ENCODE measurements at regions of chr14 and their contacts with region 1.

Region 1: DNA sequence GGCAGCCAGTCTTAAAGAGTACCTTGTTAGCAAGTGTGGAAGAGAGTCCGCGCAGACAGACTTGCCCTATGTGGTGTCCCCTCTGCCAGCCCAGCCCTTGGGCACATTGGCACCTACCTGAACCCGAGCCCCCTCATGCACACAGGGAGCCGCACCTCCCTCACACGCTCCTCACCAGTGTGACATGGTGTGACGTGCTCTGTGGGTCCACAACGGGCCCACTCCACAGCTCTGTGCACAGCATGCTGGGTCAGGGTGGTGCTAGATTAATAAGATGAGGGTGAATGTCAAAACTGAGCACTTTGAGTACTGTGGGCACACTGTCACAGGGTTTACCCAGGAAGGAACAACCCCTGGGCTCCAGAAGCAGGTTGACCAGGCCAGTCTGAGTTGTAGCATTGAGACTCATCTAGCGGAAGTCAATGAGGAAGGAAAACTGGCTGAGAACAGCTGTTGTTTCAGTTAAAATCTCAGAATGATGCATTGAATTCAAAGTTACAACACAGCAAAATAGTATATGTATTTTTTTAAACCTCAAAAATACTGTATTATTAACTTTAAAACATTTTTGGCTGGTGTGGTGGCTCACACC is 53.4 kb upstream of the AMN start:
- DNase-seq: no peak
- H3K4me3 Mint-ChIP-seq: no peak overlapping the region
- H3K27ac Mint-ChIP-seq: no peak overlapping the region
- H3K4me1 Mint-ChIP-seq: no peaks in the 10 kb centered on the region
- H3K27me3 Mint-ChIP-seq: no peaks in the 10 kb centered on the region
- CTCF ChIP-seq: no peak

Region 2: GRCh38 chr14:102774391-102775153 is 94.5 kb before region 1 on chr14:
- CTCF ChIA-PET with region 1: interaction called, 4 read pairs
- POLR2A ChIA-PET with region 1: no interaction called
- intact Hi-C with region 1: loop called (anchors 10 kb)
- DNase-seq: peak; percentile 75
- H3K4me3 Mint-ChIP-seq: no peak overlapping the region
- H3K27ac Mint-ChIP-seq: no peak overlapping the region
- H3K4me1 Mint-ChIP-seq: peaks cover 10% of the 10 kb centered on the region
- H3K27me3 Mint-ChIP-seq: peaks cover 14% of the 10 kb centered on the region
- CTCF ChIP-seq: peak; percentile 59

Region 3: DNA sequence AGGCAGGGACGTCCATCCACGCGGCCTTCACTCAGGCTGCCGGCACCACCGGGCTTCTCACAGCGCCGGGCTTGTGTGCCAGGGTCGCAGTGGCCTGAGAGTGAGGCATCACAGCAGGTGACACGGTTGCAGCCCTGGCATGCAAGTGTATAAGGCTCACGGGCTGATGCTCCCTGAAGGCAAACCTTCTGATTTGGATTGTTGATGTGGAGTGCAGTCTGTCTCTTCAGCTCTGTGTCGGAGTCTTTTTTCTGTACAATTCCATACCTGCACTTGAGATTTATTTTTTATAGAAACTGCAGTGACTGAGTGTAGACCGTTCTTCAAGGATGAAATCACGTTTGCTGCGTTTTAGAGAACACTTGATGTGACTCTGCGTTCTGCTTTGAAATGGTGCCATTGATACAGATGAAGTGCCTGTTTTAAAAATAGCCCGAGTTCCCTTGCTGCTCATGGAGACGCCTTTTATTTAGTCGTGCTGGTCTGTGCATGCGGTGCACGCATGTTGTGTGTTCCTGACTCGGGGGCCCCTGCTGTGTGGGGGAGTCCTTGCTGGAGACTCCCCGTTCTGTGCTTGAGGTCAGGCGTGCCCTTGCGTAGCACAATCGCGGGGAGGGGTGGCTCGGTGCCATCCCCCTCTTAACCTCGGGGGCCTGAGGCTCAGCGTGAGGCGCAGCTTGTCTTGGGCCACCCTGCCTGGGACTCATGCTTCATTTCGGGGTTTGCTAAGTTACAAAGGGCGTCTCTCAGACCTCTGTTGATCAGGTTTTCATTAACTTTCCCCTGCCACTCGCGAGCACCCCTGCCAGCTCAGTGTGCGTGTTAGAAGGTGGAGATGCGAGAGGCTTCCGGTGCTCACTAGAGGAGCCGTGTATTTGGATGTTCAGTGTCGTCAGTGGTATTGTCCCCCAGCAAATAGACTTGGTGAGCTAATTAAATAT is 31.8 kb after region 1 on chr14:
- CTCF ChIA-PET with region 1: no interaction called
- POLR2A ChIA-PET with region 1: no interaction called
- intact Hi-C with region 1: no loop called
- DNase-seq: no peak
- H3K4me3 Mint-ChIP-seq: no peak overlapping the region
- H3K27ac Mint-ChIP-seq: no peak overlapping the region
- H3K4me1 Mint-ChIP-seq: no peaks in the 10 kb centered on the region
- H3K27me3 Mint-ChIP-seq: no peaks in the 10 kb centered on the region
- CTCF ChIP-seq: no peak

Region 4: GRCh38 chr14:103008902-103009569 is 140.0 kb after region 1 on chr14:
- CTCF ChIA-PET with region 1: no interaction called
- POLR2A ChIA-PET with region 1: no interaction called
- intact Hi-C with region 1: no loop called
- DNase-seq: peak; percentile 26
- H3K4me3 Mint-ChIP-seq: no peak overlapping the region
- H3K27ac Mint-ChIP-seq: no peak overlapping the region
- H3K4me1 Mint-ChIP-seq: peaks cover 14% of the 10 kb centered on the region
- H3K27me3 Mint-ChIP-seq: no peaks in the 10 kb centered on the region
- CTCF ChIP-seq: no peak

Measured in MCF 10A (cell line).